Activated CD4-positive, alpha-beta T cell treated with anti-CD3 and anti-CD28 coated beads for 36 hours (primary cell): ENCODE measurements at regions of chr10 and their contacts with region 1.

Region 1: DNA sequence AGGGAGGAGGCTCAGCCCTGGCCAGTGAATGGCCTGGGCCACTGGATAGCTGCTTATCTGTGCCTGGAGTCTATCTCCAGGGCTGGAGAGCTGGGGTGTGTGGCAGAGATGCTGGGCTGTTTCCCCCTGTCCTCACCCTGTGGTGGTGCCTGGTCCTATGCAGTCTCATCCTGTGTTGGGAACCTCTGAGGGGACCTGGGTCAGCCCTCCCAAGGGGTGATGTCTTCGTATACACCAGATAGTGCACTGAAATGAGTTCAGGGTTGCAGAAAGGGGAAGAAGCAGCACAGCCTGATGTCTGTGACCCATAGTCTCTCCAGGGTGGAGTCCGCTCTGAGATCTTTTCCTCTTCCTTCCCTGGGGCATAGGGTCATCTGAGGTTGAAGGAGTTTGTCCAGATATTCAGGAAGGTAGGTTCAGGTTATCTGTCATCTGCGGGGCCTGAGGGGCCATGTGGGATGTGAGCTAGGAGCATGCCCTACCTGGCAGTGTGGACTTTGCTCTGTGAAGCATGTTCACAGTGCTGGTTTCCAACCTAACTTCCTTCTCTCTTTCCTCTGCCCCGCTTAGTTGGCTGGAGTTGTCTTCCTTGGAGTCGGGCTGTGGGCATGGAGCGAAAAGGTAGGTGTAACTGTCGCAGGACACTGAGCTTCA is 33.4 kb upstream of the SH2D4B start:
- DNase-seq: no peak
- ATAC-seq: no peak
- H3K4me3 Mint-ChIP-seq: no peak overlapping the region
- H3K27ac Mint-ChIP-seq: peak overlapping the region; percentile 98
- H3K4me1 Mint-ChIP-seq: peaks cover 65% of the 10 kb centered on the region
- H3K27me3 Mint-ChIP-seq: no peaks in the 10 kb centered on the region

Region 2: GRCh38 chr10:79542626-79543025 is 961.7 kb before region 1 on chr10:
- CTCF ChIA-PET with region 1: no interaction called
- POLR2A ChIA-PET with region 1: no interaction called
- intact Hi-C with region 1: no loop called
- DNase-seq: no peak
- ATAC-seq: no peak
- H3K4me3 Mint-ChIP-seq: no peak overlapping the region
- H3K27ac Mint-ChIP-seq: no peak overlapping the region
- H3K4me1 Mint-ChIP-seq: peaks cover 2% of the 10 kb centered on the region
- H3K27me3 Mint-ChIP-seq: no peaks in the 10 kb centered on the region

Region 3: DNA sequence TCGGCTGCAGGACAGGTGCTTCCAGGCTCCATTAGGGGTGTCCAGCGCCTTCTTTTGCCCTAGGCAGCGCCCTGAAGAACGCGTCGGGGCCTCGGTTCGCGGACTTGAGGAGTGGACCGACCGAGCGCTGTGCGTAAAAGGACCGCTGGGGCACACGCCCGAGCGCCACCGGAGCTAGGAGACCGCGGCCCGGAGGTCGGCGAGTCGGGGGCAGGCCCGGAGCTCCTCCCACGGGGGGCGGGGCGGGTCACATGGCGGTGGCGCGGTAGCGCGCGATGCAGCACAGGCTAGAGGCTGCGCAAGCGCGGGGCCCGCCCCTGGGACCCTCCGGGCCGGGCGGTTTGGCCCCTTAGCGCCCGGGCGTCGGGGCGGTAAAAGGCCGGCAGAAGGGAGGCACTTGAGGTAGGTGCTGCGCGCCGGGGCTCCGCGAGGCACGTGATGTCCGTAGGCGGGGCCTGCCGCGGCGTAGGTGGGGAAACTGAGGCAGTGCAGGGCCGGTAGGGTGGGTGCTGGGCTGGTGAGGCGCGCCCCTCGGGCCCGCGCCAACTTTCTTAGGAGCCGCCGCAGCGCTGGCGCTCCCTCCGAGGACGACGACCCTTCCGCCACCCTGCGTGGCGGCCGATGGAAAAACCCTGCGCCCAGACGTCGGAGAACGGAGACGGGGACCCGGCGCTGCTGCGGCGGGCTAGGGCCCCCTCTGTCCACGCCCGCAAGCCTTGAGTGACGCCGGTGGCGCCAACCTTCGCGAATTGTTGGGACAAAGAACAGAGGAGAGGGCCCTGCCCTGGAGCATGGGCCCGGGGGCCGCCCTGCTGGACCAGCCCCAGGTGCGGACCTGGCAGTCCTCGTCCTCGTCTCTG is 95.8 kb before region 1 on chr10 and contains the start of gene PRXL2A:
- CTCF ChIA-PET with region 1: interaction called, 22 read pairs
- POLR2A ChIA-PET with region 1: interaction called, 10 read pairs
- intact Hi-C with region 1: loop called in 1 of 2 experiments (anchors 1 kb)
- DNase-seq: peak; percentile 91
- ATAC-seq: peak; percentile 84
- H3K4me3 Mint-ChIP-seq: peak within 1 kb of the TSS; percentile 76
- H3K27ac Mint-ChIP-seq: peak within 1 kb of the TSS; percentile 94
- H3K4me1 Mint-ChIP-seq: peaks cover 40% of the 10 kb centered on the region
- H3K27me3 Mint-ChIP-seq: no peaks in the 10 kb centered on the region
- total RNA-seq, gene PRXL2A: 15.0 to 17.6 TPM

Region 4: DNA sequence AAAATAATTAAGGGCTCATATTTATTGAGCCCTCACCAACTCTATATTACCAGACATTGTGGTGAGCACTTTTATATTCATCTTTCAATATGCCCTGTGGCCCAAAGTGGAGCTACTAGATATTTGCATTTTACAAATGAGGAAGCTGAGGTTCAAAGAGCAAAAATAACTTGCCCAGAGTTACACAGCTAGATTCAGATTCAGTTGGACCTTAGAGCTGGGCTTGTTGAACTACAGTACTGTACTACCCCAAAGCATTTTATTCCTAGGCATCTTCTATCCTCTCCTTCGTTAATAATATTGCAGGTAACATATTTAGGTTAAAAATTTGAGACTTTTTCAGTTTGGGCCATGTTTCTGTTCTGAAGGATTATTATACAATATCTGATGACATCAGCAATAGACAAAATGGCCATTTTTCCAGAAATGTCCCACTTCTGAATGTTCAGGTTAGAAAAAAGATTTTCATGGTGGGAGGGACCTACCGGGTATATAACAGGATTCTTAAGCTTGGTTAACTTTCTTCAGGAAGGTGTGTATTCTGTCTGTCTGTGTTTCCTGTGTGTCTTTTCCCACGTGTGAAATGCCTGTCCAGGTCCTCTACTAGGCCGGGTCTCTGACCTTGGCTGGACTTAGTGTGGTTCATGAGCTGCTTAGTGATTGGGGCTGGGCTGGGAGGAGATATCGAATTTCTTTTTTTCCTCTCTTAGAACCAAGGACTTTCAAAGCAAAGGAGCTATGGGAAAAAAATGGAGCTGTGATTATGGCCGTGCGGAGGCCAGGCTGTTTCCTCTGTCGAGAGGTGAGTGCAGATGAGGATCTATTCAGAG is 82.4 kb before region 1 on chr10:
- CTCF ChIA-PET with region 1: interaction called, 11 read pairs
- POLR2A ChIA-PET with region 1: no interaction called
- intact Hi-C with region 1: no loop called
- DNase-seq: no peak
- ATAC-seq: no peak
- H3K4me3 Mint-ChIP-seq: no peak overlapping the region
- H3K27ac Mint-ChIP-seq: no peak overlapping the region
- H3K4me1 Mint-ChIP-seq: no peaks in the 10 kb centered on the region
- H3K27me3 Mint-ChIP-seq: no peaks in the 10 kb centered on the region

Region 5: DNA sequence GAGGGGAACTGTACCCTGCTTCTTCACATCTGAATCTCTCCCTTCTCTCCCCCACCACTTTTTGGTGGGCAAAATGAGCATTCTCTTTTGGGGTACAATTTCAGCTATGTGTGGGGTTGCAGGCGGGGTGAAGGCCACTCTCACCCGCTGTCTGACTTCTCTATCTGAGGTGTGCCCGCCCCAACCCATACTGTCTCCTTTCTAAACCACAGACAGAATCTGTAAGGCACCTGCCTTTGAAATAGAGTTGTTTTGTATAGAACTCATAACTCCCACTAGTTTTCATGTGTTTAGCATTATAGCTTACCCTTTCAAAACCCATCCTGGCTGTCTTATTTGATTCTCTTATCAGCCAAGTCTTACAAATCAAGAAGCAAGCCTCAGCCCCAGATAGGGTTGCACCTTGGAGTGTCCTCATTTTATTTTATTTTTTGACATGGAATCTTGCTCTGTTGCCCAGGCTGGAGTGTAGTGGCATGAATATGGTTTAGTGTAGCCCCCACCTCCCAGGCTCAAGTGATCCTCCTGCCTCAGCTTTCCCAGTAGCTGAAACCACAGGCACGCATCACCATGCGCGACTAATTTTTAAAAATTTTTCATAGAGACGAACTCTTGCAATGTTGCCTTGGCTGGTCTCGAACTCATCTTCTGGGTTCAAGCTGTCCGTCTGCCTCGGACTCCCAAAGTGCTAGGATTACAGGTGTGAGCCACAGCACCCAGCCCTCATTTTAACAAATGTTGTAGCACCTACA is 38.3 kb before region 1 on chr10:
- CTCF ChIA-PET with region 1: interaction called, 372 read pairs
- POLR2A ChIA-PET with region 1: interaction called, 5 read pairs
- intact Hi-C with region 1: loop called (anchors 1 to 2 kb)
- DNase-seq: peak; percentile 65
- ATAC-seq: peak; percentile 52
- H3K4me3 Mint-ChIP-seq: peak overlapping the region; percentile 64
- H3K27ac Mint-ChIP-seq: peak overlapping the region; percentile 97
- H3K4me1 Mint-ChIP-seq: peaks cover 98% of the 10 kb centered on the region
- H3K27me3 Mint-ChIP-seq: no peaks in the 10 kb centered on the region

Region 6: GRCh38 chr10:80515936-80516335 is 11.7 kb after region 1 on chr10:
- CTCF ChIA-PET with region 1: interaction called, 11 read pairs
- POLR2A ChIA-PET with region 1: interaction called, 3 read pairs
- intact Hi-C with region 1: no loop called
- DNase-seq: no peak
- ATAC-seq: no peak
- H3K4me3 Mint-ChIP-seq: no peak overlapping the region
- H3K27ac Mint-ChIP-seq: peak overlapping the region; percentile 73
- H3K4me1 Mint-ChIP-seq: peaks cover 16% of the 10 kb centered on the region
- H3K27me3 Mint-ChIP-seq: no peaks in the 10 kb centered on the region

Region 7: DNA sequence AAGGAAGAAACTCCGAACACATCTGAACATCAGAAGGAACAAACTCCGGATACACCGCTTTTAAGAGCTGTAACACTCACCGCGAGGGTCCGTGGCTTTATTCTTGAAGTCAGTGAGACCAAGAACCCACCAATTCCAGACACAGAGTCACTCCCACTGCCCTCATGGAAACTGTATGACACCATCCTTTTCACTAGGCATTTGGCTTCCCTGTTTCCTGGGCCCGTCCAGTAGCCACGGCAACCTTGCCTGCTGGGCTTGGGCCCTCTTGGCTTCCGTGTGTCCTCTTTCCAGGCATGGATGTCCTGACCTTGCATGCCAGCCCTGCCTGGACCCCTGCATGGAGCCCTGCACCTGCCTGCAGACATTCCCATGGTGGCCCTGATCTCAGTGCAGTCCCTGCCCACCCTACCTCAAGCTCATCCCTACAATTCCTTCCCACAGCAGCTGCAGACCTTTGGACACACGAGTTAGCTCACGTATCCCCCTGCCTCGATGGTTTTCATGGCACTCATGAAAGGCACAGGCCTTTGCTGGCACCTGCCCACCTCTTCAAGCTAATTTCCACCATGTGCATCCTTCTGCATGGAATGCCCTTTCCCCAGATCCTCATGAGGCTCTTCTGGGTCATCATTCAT is 40.1 kb after region 1 on chr10:
- CTCF ChIA-PET with region 1: no interaction called
- POLR2A ChIA-PET with region 1: no interaction called
- intact Hi-C with region 1: no loop called
- DNase-seq: no peak
- ATAC-seq: no peak
- H3K4me3 Mint-ChIP-seq: no peak overlapping the region
- H3K27ac Mint-ChIP-seq: no peak overlapping the region
- H3K4me1 Mint-ChIP-seq: peaks cover 8% of the 10 kb centered on the region
- H3K27me3 Mint-ChIP-seq: peaks cover 8% of the 10 kb centered on the region

Region 8: DNA sequence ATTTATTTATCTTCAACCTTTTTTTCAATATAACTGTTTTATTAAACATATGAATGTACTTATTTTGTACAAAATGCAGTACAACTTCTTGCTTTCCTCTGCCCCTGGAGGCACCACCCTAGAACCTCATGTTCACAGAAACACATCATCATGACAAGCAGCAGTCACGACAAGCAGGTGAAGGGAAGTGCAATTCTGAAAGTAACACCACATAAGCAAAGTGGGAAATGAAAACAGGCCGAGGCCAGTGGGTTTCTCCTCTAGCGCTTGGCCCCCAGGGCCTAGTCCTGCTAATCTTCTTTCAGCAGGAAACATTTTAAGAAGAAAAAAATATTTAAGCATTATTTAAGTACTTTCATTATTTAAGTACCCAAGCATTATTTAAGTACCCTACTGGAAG is 631.6 kb after region 1 on chr10:
- CTCF ChIA-PET with region 1: no interaction called
- POLR2A ChIA-PET with region 1: no interaction called
- intact Hi-C with region 1: no loop called
- DNase-seq: no peak
- ATAC-seq: no peak
- H3K4me3 Mint-ChIP-seq: no peak overlapping the region
- H3K27ac Mint-ChIP-seq: no peak overlapping the region
- H3K4me1 Mint-ChIP-seq: no peaks in the 10 kb centered on the region
- H3K27me3 Mint-ChIP-seq: no peaks in the 10 kb centered on the region